GM12878 (cell line): ENCODE measurements at regions of chr22 and their contacts with region 1.

Region 1: DNA sequence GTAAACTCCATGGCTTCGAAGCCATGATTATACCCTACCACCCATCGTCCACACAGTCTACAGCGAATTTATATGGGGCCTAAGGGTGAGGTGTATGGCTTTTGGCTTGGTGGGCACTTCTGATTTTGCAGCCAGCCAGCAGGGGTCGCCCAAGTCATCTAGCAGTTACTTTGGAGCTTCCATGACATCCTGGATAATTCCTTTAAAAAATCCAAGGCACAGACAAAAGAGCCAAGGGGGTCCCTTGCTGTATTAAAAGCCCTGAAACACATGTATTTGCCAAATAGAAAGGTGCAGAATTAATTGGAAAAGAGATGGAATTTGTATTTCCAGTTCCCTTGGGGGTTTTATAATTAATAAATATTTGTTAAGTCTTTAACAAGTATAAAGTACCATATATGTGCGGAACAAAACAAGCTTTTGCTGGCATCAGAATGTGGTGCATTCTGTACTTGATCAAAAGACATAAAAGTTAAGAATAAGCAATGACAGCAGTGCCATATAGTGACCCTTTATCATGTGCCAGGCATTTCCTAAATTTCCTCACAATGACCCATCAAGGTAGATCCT is 132.8 kb upstream of the PITPNB start:
- DNase-seq: no peak
- ATAC-seq: peak; percentile 63
- H3K4me3 ChIP-seq: no peak overlapping the region
- H3K27ac ChIP-seq: no peak overlapping the region
- H3K4me1 ChIP-seq: no peaks in the 10 kb centered on the region
- H3K27me3 ChIP-seq: no peaks in the 10 kb centered on the region; a peak in 1 of 4 replicates
- CTCF ChIP-seq: peak; percentile 61 to 75 (median 63)
- EP300 ChIP-seq: no peak
- POLR2A ChIP-seq: no peak
- RAD21 ChIP-seq: peak; percentile 62

Region 2: DNA sequence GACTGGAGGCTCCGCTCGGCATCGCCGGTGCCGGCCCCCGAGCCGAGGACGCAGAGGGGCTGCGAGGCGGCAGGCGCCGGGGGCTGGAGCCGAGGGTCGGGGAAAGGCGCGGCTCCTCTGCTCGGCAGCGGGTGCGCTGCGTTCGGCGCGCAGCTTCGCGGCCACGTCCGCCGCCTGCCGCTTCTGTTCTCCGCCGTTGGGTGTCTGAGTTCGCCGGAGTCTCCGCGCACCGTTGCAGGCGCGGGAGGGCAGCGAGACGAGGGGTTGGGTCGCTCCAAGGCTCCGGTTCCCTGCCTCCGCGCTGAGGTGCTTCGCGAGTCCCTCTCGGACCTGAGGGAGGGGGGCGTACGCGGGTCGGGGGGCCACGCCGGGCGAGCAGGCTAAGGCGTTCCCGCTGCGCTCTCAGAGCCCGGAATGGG is 250.7 kb before region 1 on chr22:
- CTCF ChIA-PET with region 1: no interaction called
- POLR2A ChIA-PET with region 1: no interaction called
- RAD21 ChIA-PET with region 1: no interaction called
- SMC1A ChIA-PET with region 1: no interaction called
- in situ Hi-C with region 1: no loop called
- intact Hi-C with region 1: no loop called
- DNase-seq: no peak
- ATAC-seq: no peak
- H3K4me3 ChIP-seq: peak overlapping the region; percentile 16; the same call in 1 of the 2 replicates
- H3K27ac ChIP-seq: no peak overlapping the region
- H3K4me1 ChIP-seq: no peaks in the 10 kb centered on the region
- H3K27me3 ChIP-seq: peaks cover 0 to 6% of the 10 kb centered on the region in 2 experiments; a peak in 3 of 4 replicates
- CTCF ChIP-seq: no peak
- EP300 ChIP-seq: no peak
- POLR2A ChIP-seq: no peak
- RAD21 ChIP-seq: no peak

Region 3: GRCh38 chr22:28019881-28020871 is 31.7 kb before region 1 on chr22:
- CTCF ChIA-PET with region 1: interaction called, 19 read pairs
- POLR2A ChIA-PET with region 1: no interaction called
- RAD21 ChIA-PET with region 1: interaction called, 3 read pairs
- SMC1A ChIA-PET with region 1: interaction called, 5 read pairs
- in situ Hi-C with region 1: no loop called
- intact Hi-C with region 1: no loop called
- DNase-seq: no peak
- ATAC-seq: peak; percentile 95
- H3K4me3 ChIP-seq: no peak overlapping the region
- H3K27ac ChIP-seq: no peak overlapping the region
- H3K4me1 ChIP-seq: no peaks in the 10 kb centered on the region
- H3K27me3 ChIP-seq: 0 out of 4 replicates have a peak, but pooled peaks cover 0 to 1% of the 10 kb centered on the region in 2 experiments
- CTCF ChIP-seq: peak; percentile 93 to 96 (median 95)
- EP300 ChIP-seq: no peak
- POLR2A ChIP-seq: no peak
- RAD21 ChIP-seq: peak; percentile 84

Region 4: DNA sequence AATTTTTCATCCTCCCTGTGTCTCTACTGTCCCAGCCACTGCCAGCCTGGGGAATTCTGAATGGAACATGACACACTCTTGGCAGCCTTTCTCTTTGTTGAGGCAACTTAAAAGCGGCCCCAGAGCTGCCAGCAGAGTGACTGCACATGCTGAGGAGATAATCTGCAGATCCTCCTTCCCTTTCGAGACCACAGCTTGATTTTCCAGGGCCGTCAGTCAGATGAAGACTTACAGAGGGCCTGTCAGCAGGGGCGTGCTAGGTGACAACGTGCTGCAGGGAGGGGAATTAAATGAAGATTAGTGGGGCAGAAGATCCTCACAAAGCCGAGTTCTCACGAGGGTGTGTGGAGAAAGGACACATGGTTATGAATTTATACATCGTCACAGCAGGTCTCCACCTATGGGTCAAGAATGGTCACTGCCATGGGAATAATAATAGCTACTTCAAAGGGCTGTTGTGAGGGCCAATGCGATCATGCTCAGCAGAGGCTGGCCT is 60.7 kb after region 1 on chr22:
- CTCF ChIA-PET with region 1: interaction called, 11 read pairs
- POLR2A ChIA-PET with region 1: no interaction called
- RAD21 ChIA-PET with region 1: no interaction called
- SMC1A ChIA-PET with region 1: no interaction called
- in situ Hi-C with region 1: no loop called
- intact Hi-C with region 1: no loop called
- DNase-seq: no peak
- ATAC-seq: peak; percentile 80
- H3K4me3 ChIP-seq: no peak overlapping the region
- H3K27ac ChIP-seq: no peak overlapping the region
- H3K4me1 ChIP-seq: no peaks in the 10 kb centered on the region
- H3K27me3 ChIP-seq: peaks cover 0 to 2% of the 10 kb centered on the region in 2 experiments; a peak in 2 of 4 replicates
- CTCF ChIP-seq: peak in 2 of 3 experiments; percentile 34 to 46; a peak in 3 of 6 replicates
- EP300 ChIP-seq: no peak
- POLR2A ChIP-seq: no peak
- RAD21 ChIP-seq: 0 out of 2 replicates have a peak, but pooled peaks have one; percentile 14

Region 5: GRCh38 chr22:28442264-28442710 is 390.4 kb after region 1 on chr22:
- CTCF ChIA-PET with region 1: interaction called, 45 read pairs
- POLR2A ChIA-PET with region 1: no interaction called
- RAD21 ChIA-PET with region 1: no interaction called
- SMC1A ChIA-PET with region 1: interaction called, 7 read pairs
- in situ Hi-C with region 1: no loop called
- intact Hi-C with region 1: no loop called
- DNase-seq: no peak
- ATAC-seq: peak; percentile 99
- H3K4me3 ChIP-seq: no peak overlapping the region
- H3K27ac ChIP-seq: no peak overlapping the region
- H3K4me1 ChIP-seq: no peaks in the 10 kb centered on the region
- H3K27me3 ChIP-seq: peaks cover 4 to 8% of the 10 kb centered on the region in 2 experiments
- CTCF ChIP-seq: peak; percentile 55 to 66 (median 61)
- EP300 ChIP-seq: no peak
- POLR2A ChIP-seq: no peak
- RAD21 ChIP-seq: peak; percentile 80

Region 6: DNA sequence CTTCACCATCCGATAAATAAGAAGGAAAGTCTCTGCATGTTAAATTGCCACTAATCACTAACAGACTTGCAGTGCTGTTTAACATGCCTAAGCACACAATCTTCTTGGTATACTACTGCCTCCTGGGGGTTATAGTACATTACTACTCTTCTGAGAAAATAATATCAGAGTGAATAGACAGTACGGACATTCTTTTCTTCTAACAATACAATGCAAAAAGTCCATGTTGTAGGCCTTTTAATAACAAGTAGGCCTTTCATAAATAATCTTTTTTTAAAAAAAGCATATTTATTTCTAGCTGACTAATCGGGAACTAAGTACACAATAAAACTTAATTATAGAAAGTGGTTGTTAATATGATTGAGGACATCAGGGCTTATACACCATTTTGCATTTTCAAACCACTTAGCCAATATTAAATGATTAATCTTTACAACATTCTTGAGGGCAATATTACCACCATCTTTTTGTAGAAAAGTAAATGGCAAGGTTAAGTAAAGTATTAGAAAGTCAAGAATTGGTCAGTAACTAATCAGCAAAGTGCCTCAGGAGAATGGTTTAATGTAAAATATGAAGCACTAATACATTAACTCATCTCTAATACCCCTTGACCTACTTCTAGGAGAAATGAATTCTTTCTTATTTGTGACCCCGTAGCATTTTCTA is 543.1 kb after region 1 on chr22:
- CTCF ChIA-PET with region 1: interaction called, 14 read pairs
- POLR2A ChIA-PET with region 1: no interaction called
- RAD21 ChIA-PET with region 1: interaction called, 6 read pairs
- SMC1A ChIA-PET with region 1: interaction called, 29 read pairs
- in situ Hi-C with region 1: loop called (anchors 10 kb)
- intact Hi-C with region 1: loop called (anchors 1 kb)
- DNase-seq: no peak
- ATAC-seq: peak; percentile 93
- H3K4me3 ChIP-seq: no peak overlapping the region
- H3K27ac ChIP-seq: no peak overlapping the region
- H3K4me1 ChIP-seq: no peaks in the 10 kb centered on the region
- H3K27me3 ChIP-seq: no peaks in the 10 kb centered on the region
- CTCF ChIP-seq: peak; percentile 50 to 79 (median 67); a peak in 5 of 6 replicates
- EP300 ChIP-seq: no peak
- POLR2A ChIP-seq: no peak
- RAD21 ChIP-seq: peak; percentile 86